Activated CD4-positive, alpha-beta T cell treated with anti-CD3 and anti-CD28 coated beads for 36 hours (primary cell): ENCODE measurements at regions of chr2 and their contacts with region 1.

Region 1: GRCh38 chr2:8544786-8545694 is 136.8 kb upstream of the ID2 start:
- DNase-seq: peak; percentile 96
- ATAC-seq: peak; percentile 66
- H3K4me3 Mint-ChIP-seq: no peak overlapping the region
- H3K27ac Mint-ChIP-seq: peak overlapping the region; percentile 99
- H3K4me1 Mint-ChIP-seq: peaks cover 77% of the 10 kb centered on the region
- H3K27me3 Mint-ChIP-seq: no peaks in the 10 kb centered on the region

Region 2: GRCh38 chr2:7758073-7758759 is 786.8 kb before region 1 on chr2:
- CTCF ChIA-PET with region 1: no interaction called
- POLR2A ChIA-PET with region 1: no interaction called
- intact Hi-C with region 1: loop called in 1 of 2 experiments (anchors 1 kb)
- DNase-seq: no peak
- ATAC-seq: peak; percentile 82
- H3K4me3 Mint-ChIP-seq: no peak overlapping the region
- H3K27ac Mint-ChIP-seq: peak overlapping the region; percentile 62
- H3K4me1 Mint-ChIP-seq: peaks cover 16% of the 10 kb centered on the region
- H3K27me3 Mint-ChIP-seq: peaks cover 14% of the 10 kb centered on the region

Region 3: GRCh38 chr2:7984693-7985353 is 560.2 kb before region 1 on chr2:
- CTCF ChIA-PET with region 1: no interaction called
- POLR2A ChIA-PET with region 1: no interaction called
- intact Hi-C with region 1: loop called (anchors 2 to 10 kb)
- DNase-seq: no peak
- ATAC-seq: peak; percentile 96
- H3K4me3 Mint-ChIP-seq: peak overlapping the region; percentile 44
- H3K27ac Mint-ChIP-seq: peak overlapping the region; percentile 95
- H3K4me1 Mint-ChIP-seq: peaks cover 33% of the 10 kb centered on the region
- H3K27me3 Mint-ChIP-seq: no peaks in the 10 kb centered on the region

Region 4: GRCh38 chr2:8303322-8303832 is 241.7 kb before region 1 on chr2:
- CTCF ChIA-PET with region 1: no interaction called
- POLR2A ChIA-PET with region 1: no interaction called
- intact Hi-C with region 1: loop called (anchors 1 to 5 kb)
- DNase-seq: peak; percentile 53
- ATAC-seq: peak; percentile 7
- H3K4me3 Mint-ChIP-seq: no peak overlapping the region
- H3K27ac Mint-ChIP-seq: peak overlapping the region; percentile 63
- H3K4me1 Mint-ChIP-seq: peaks cover 51% of the 10 kb centered on the region
- H3K27me3 Mint-ChIP-seq: peaks cover 5% of the 10 kb centered on the region

Region 5: DNA sequence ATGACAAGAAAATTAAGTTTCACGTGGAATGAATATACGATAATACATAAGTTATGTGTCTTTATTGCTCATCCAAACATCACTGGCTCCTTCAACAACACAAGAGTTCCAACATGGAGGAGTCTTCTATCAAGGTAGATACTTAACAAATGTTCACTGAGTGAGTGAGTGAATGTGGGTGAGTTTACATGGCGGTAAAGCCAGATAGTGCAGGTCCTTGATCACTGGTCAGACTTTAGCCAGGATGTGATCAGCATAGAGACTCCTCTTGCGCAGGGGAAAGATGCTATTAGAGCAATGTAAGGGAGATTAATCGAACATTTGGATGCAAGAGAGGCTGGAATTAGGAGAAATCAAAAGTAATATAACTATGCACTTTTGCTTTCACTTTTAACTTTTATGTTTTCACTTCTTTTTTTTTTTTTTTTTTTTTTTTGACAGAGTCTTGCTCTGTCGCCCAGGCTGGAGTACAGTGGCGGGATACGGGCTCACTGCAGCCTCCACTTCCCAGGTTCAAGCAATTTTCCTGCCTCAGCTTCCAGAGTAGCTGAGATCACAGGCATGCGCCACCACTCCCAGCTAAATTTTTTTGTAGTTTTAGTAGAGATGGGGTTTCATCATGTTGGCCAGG is 112.2 kb before region 1 on chr2:
- CTCF ChIA-PET with region 1: no interaction called
- POLR2A ChIA-PET with region 1: interaction called, 7 read pairs
- intact Hi-C with region 1: loop called in 1 of 2 experiments (anchors 2 kb)
- DNase-seq: no peak
- ATAC-seq: peak; percentile 39
- H3K4me3 Mint-ChIP-seq: peak overlapping the region; percentile 21
- H3K27ac Mint-ChIP-seq: peak overlapping the region; percentile 58
- H3K4me1 Mint-ChIP-seq: peaks cover 15% of the 10 kb centered on the region
- H3K27me3 Mint-ChIP-seq: no peaks in the 10 kb centered on the region

Region 6: DNA sequence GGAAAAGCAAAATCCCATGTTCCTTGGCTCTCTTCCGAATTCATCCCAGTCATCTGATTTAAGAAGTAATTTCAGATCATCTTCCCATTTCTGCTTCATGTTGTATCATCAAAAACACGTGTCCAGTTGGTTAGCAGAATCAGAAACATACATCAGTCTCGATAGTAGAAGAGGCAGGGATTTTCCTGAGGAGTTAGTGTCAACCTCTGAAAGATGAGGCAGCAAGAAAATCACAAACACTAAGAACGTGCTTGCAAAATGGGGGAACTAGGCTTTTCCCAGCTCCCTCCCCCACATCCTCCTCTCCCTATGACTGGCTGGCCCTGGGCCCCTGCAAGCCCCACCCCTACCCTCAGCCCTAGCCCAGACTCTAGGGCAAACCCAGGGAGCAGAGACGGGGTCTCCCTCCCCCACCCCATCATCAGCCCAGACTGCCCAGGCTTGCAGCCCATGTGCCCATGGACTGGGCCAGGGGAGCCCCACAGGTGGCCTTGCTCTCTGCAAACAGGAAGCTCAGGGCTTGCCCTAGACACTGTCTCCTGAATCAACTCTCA is 24.2 kb before region 1 on chr2:
- CTCF ChIA-PET with region 1: interaction called, 16 read pairs
- POLR2A ChIA-PET with region 1: interaction called, 41 read pairs
- intact Hi-C with region 1: no loop called
- DNase-seq: peak; percentile 74
- ATAC-seq: peak; percentile 79
- H3K4me3 Mint-ChIP-seq: no peak overlapping the region
- H3K27ac Mint-ChIP-seq: peak overlapping the region; percentile 82
- H3K4me1 Mint-ChIP-seq: peaks cover 63% of the 10 kb centered on the region
- H3K27me3 Mint-ChIP-seq: no peaks in the 10 kb centered on the region